Activated CD4-positive, alpha-beta memory T cell treated with anti-CD3 and anti-CD28 coated beads for 36 hours (primary cell): ENCODE measurements at regions of chr21 and their contacts with region 1.

Region 1: DNA sequence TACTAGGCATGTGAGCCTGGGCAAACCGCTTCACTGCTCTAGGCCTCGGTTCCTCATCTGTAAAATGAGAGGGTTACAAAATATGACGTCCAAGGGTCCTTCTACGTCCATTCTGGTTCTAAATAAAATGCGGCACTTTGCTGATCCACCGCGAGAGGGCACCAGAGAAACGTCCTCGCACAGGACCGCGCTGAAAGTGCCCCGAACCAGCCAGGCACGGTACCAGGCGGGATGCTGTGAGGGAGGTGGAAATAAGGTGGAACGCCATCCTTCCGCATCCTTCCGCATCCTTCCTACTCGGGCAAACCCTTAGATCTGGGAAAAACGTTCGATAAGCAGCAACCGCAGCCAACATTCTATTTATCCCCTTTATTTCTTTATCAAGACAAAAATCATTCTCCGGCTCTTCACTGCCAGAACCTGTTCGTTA is 60.3 kb upstream of the KRTAP19-8 start:
- DNase-seq: peak; percentile 83
- H3K4me3 Mint-ChIP-seq: peak overlapping the region; percentile 20
- H3K27ac Mint-ChIP-seq: no peak overlapping the region
- H3K4me1 Mint-ChIP-seq: peaks cover 26% of the 10 kb centered on the region
- H3K27me3 Mint-ChIP-seq: peaks cover 3% of the 10 kb centered on the region

Region 2: GRCh38 chr21:31088315-31088714 is 10.3 kb before region 1 on chr21:
- CTCF ChIA-PET with region 1: interaction called, 10 read pairs
- POLR2A ChIA-PET with region 1: no interaction called
- intact Hi-C with region 1: no loop called
- DNase-seq: no peak
- H3K4me3 Mint-ChIP-seq: no peak overlapping the region
- H3K27ac Mint-ChIP-seq: no peak overlapping the region
- H3K4me1 Mint-ChIP-seq: peaks cover 7% of the 10 kb centered on the region
- H3K27me3 Mint-ChIP-seq: peaks cover 9% of the 10 kb centered on the region

Region 3: DNA sequence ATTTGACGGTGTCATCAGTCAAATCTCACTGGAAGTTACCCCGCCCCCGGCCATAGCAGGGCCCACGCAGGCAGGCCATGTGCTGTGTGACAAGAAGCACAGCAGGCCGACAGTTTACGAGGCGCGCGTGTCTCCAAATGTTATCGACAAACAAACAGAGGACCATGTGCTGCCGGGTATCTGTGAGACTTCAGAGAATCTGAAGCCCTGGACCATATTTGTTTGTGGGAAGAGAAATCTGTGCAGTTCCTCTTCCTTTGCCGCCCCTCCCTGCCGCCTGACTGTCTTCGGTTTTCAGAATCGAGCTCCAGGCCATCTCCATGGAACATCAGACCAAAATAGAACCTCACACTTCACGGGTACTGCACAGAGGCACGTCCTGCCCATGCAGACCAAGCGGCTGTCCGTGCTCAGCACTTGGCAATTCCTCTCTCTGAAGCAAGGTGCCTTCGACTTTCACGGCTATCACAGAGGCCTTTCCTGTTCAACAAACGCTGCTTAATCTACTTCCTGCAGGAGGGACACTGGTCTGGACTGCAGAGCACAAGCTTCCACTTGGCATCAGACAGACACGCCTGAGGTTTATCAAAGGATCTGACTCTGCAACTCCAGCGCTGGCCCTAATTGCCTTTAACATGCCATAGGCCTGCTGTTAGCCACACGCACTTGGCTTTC is 75.4 kb after region 1 on chr21:
- CTCF ChIA-PET with region 1: interaction called, 10 read pairs
- POLR2A ChIA-PET with region 1: no interaction called
- intact Hi-C with region 1: no loop called
- DNase-seq: peak; percentile 75
- H3K4me3 Mint-ChIP-seq: peak overlapping the region; percentile 56
- H3K27ac Mint-ChIP-seq: peak overlapping the region; percentile 57
- H3K4me1 Mint-ChIP-seq: peaks cover 87% of the 10 kb centered on the region
- H3K27me3 Mint-ChIP-seq: no peaks in the 10 kb centered on the region

Region 4: GRCh38 chr21:31509194-31510017 is 410.8 kb after region 1 on chr21:
- CTCF ChIA-PET with region 1: interaction called, 3 read pairs
- POLR2A ChIA-PET with region 1: no interaction called
- intact Hi-C with region 1: loop called (anchors 5 kb)
- DNase-seq: peak; percentile 92
- H3K4me3 Mint-ChIP-seq: peak overlapping the region; percentile 44
- H3K27ac Mint-ChIP-seq: peak overlapping the region; percentile 60
- H3K4me1 Mint-ChIP-seq: peaks cover 24% of the 10 kb centered on the region
- H3K27me3 Mint-ChIP-seq: no peaks in the 10 kb centered on the region

Region 5: GRCh38 chr21:31604591-31605190 is 506.1 kb after region 1 on chr21:
- CTCF ChIA-PET with region 1: interaction called, 32 read pairs
- POLR2A ChIA-PET with region 1: no interaction called
- intact Hi-C with region 1: loop called (anchors 1 kb)
- DNase-seq: peak; percentile 80
- H3K4me3 Mint-ChIP-seq: no peak overlapping the region
- H3K27ac Mint-ChIP-seq: no peak overlapping the region
- H3K4me1 Mint-ChIP-seq: peaks cover 5% of the 10 kb centered on the region
- H3K27me3 Mint-ChIP-seq: peaks cover 4% of the 10 kb centered on the region